Activated CD8-positive, alpha-beta T cell treated with anti-CD3 and anti-CD28 coated beads, Interleukin-2, amount 10 ng/mL, durations not matched to agents 7 days and 5 days (primary cell): ENCODE measurements at regions of chr9 and their contacts with region 1.

Region 1: DNA sequence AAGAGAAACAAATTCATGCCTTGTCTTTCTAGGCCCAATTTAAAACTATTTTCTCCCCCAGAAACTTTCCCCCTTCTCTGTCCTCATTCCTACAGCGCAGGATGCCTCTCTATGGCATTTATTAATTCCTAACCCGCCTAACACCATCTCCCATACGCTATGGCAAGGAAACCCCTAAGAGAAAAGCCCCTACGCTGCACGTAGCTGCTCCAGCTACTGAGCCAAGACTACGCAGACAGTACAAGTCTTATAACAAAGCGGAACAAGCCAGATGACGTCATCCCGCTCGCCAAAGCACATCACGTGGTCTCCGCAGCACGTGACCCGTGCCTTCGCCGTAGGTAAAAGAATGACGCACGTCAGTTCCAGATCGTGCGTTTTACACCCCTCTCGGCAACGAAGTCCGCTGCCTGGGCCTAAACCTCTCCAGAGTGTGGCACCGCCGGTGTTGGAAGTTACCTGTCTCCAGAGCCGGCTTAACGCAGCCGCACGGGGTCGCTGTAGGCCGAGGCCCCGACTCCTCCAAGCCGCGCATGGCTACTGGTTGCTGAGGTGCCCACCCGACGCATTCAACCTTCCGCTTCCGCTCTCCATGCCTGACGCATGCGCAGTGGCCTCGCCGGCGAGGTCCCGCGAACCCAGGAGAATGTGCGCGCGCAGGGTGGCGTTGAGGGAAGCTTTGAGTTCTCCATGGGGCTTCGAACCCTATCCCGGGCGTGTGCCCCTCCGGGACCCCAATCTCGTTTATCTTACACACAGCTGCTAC is at the start of gene TRMO:
- DNase-seq: peak; percentile 98
- ATAC-seq: peak; percentile 85
- H3K4me3 Mint-ChIP-seq: peak within 1 kb of the TSS; percentile 89
- H3K27ac Mint-ChIP-seq: peak within 1 kb of the TSS; percentile 97
- H3K4me1 Mint-ChIP-seq: peaks cover 49% of the 10 kb centered on the region
- H3K27me3 Mint-ChIP-seq: peaks cover 2% of the 10 kb centered on the region
- total RNA-seq, gene TRMO: 18.7 to 19.2 TPM

Region 2: GRCh38 chr9:97696803-97697601 is 225.1 kb before region 1 on chr9 and contains the start of gene XPA:
- CTCF ChIA-PET with region 1: interaction called, 13 read pairs
- POLR2A ChIA-PET with region 1: interaction called, 6 read pairs
- DNase-seq: peak; percentile 97
- ATAC-seq: peak; percentile 98
- H3K4me3 Mint-ChIP-seq: peak within 1 kb of the TSS; percentile 81
- H3K27ac Mint-ChIP-seq: peak within 1 kb of the TSS; percentile 88
- H3K4me1 Mint-ChIP-seq: peaks cover 55% of the 10 kb centered on the region
- H3K27me3 Mint-ChIP-seq: peaks cover 9% of the 10 kb centered on the region
- total RNA-seq, gene XPA: 10.2 TPM

Region 3: GRCh38 chr9:97840521-97840920 is 81.6 kb before region 1 on chr9:
- CTCF ChIA-PET with region 1: no interaction called
- POLR2A ChIA-PET with region 1: no interaction called
- DNase-seq: no peak
- ATAC-seq: no peak
- H3K4me3 Mint-ChIP-seq: no peak overlapping the region
- H3K27ac Mint-ChIP-seq: no peak overlapping the region
- H3K4me1 Mint-ChIP-seq: no peaks in the 10 kb centered on the region
- H3K27me3 Mint-ChIP-seq: peaks cover 54% of the 10 kb centered on the region

Region 4: DNA sequence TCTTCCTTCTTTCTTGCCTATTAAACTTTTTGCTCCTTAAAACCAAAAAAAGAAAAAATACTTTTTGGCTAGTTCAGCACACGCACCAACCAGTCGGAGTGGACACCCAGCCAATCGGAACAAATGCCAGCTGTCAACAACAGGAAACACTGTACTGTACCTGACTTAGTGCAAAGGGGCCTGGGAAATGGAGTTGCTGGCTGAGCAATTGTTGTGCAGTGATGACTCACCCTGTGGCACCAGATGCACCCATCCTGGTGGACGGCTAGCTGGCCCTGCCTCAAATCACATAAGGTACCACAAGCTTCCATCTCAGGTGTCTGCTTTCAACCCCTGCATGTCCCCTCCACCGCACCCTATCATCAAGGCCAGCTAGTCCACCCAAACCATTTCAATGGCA is 48.3 kb before region 1 on chr9:
- CTCF ChIA-PET with region 1: no interaction called
- POLR2A ChIA-PET with region 1: no interaction called
- DNase-seq: no peak
- ATAC-seq: no peak
- H3K4me3 Mint-ChIP-seq: no peak overlapping the region
- H3K27ac Mint-ChIP-seq: no peak overlapping the region
- H3K4me1 Mint-ChIP-seq: no peaks in the 10 kb centered on the region
- H3K27me3 Mint-ChIP-seq: peaks cover 19% of the 10 kb centered on the region

Region 5: DNA sequence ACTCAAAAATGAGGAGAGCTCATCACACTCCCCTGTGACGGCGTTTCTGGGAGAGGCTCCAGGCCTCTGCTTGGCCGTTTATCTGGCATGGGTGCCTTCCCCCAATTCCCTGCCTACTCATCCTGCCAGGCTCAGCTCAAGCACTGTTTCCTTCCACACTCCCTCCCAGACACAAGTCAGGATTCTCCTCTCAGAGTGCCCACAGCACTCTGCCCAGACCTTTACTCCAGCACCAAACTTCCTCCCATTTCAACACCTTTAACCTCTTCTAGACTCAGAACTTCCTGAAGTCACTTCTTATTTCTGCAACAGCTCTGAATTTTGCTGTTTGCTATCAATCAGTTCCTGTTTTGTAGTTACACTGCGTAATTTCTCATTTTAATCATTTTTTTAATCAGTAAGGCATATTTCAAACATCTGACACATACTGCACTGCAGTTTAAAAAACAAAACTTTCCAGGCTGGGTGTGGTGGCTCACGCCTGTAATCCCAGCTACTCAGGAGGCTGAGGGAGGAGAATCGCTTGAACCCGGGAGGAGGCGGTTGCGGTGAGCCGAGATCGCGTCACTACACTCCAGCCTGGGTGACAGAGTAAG is 15.8 kb before region 1 on chr9:
- CTCF ChIA-PET with region 1: interaction called, 222 read pairs
- POLR2A ChIA-PET with region 1: interaction called, 76 read pairs
- DNase-seq: no peak
- ATAC-seq: peak; percentile 3
- H3K4me3 Mint-ChIP-seq: peak overlapping the region; percentile 72
- H3K27ac Mint-ChIP-seq: peak overlapping the region; percentile 98
- H3K4me1 Mint-ChIP-seq: peaks cover 70% of the 10 kb centered on the region
- H3K27me3 Mint-ChIP-seq: no peaks in the 10 kb centered on the region

Region 6: DNA sequence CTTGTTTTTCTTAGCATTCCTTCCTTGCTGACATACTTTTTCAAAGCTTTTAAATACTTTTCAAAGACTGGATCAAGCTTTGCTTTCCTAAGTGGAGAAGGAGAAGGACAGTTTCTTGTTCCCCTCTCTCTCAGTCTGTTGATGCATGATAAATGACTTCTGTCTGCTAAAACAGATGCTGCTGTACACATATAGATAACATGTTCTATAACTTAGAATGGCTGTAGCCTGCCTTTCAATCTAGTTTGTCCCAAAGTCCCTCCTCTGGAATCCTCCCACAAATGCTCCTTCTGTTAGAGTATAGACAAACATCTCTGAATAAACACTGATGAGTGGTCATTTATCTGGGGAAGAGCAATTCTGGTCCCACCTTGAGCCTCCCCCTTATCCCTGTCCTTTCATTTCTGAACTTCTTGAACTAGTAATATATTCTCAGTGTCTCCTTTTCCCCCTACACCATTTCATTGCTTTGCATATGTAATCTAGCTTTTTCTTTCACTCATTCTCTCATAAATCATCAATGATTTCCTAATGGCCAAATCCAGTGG is 21.2 kb after region 1 on chr9:
- CTCF ChIA-PET with region 1: interaction called, 74 read pairs
- POLR2A ChIA-PET with region 1: interaction called, 4 read pairs
- DNase-seq: no peak
- ATAC-seq: no peak
- H3K4me3 Mint-ChIP-seq: no peak overlapping the region
- H3K27ac Mint-ChIP-seq: no peak overlapping the region
- H3K4me1 Mint-ChIP-seq: peaks cover 6% of the 10 kb centered on the region
- H3K27me3 Mint-ChIP-seq: peaks cover 20% of the 10 kb centered on the region

Region 7: DNA sequence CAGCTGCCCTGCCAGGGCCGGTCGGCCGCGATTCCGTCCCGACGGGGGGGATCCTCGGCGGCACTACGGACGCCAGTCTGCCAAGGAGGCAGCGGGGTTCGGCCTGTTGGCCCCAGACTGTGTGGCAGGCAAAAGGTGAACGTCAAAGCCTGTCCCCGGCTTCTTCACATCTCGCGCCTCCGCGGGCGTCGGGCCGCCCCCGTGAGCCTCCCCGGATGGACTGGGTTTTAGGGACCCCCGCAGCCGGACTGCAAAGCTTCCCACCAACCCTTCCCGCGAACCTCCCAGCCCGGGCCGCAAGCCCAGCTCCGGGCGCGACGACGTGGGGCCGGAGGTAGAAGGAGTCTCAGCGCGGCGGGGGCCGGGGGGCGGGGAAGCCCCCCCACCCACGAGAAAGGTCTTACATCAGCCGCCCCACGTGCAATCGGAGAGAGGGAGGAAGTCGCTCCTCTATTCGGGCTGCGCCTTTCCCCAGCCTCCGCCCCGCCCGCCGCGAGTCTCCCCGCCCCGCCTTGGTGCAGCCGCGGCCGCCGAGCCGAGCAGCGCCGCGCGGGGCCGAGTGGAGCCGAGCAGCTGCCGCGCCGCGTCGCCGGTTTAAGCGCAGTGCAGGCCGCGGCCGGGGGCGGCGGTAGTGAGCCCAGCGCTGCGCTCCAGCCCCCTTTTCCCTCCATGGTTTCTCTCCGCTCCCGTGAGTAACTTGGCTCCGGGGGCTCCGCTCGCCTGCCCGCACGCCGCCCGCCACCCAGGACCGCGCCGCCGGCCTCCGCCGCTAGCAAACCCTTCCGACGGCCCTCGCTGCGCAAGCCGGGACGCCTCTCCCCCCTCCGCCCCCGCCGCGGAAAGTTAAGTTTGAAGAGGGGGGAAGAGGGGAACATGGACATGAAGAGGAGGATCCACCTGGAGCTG is 60.8 kb after region 1 on chr9 and contains the start of gene ANP32B:
- CTCF ChIA-PET with region 1: interaction called, 58 read pairs
- POLR2A ChIA-PET with region 1: interaction called, 110 read pairs
- DNase-seq: peak; percentile 95
- ATAC-seq: peak; percentile 83
- H3K4me3 Mint-ChIP-seq: peak within 1 kb of the TSS; percentile 84
- H3K27ac Mint-ChIP-seq: peak within 1 kb of the TSS; percentile 95
- H3K4me1 Mint-ChIP-seq: peaks cover 48% of the 10 kb centered on the region
- H3K27me3 Mint-ChIP-seq: no peaks in the 10 kb centered on the region
- total RNA-seq, gene ANP32B: 347 to 354 TPM

Region 8: DNA sequence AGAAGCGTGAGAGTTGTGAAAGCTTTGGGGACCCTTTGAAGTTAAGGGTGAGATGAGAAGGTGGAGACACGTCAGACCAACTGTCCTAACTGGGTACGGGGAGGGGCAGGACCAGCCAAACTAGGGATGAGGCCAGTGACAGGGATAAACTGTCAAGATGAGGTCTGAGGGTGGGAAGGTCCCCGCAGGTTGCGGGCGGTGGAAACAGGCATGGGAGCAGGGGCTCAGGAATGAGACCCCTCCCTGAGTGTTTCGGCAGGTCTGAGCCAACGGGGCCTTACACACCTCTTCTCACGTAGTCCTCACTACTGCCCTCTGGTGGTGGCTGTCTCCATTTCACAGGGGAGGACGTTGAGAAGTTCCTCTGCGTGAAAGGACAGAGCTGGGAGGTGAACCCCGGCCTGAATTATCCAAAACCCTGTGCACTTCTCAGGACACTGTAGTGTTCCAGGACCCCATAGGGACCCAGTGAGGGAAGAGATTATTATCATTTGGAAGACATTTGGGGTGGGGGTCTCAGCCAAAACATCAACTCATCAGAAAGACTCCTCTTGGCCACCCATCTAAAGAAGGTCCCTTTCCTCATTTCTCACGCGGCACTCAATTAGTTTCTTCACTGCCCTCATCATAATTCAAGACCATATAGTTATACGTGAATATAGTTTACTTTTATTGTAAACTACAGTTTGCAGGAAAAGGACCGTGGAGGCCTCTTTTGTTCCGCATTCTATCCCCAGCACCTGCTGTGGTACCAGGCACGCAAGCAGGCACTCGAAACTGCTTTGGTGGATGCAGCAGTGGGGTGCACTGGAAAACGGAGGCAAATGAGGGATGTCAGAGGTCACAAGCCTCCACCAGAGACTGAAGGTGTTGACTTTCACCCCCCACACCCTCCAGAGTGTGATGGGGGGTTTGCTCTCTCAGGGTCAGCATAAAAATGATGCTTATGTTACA is 112.7 kb after region 1 on chr9:
- CTCF ChIA-PET with region 1: interaction called, 50 read pairs
- POLR2A ChIA-PET with region 1: interaction called, 3 read pairs
- DNase-seq: peak; percentile 95
- ATAC-seq: peak; percentile 98
- H3K4me3 Mint-ChIP-seq: no peak overlapping the region
- H3K27ac Mint-ChIP-seq: peak overlapping the region; percentile 65
- H3K4me1 Mint-ChIP-seq: peaks cover 10% of the 10 kb centered on the region
- H3K27me3 Mint-ChIP-seq: no peaks in the 10 kb centered on the region

Region 9: DNA sequence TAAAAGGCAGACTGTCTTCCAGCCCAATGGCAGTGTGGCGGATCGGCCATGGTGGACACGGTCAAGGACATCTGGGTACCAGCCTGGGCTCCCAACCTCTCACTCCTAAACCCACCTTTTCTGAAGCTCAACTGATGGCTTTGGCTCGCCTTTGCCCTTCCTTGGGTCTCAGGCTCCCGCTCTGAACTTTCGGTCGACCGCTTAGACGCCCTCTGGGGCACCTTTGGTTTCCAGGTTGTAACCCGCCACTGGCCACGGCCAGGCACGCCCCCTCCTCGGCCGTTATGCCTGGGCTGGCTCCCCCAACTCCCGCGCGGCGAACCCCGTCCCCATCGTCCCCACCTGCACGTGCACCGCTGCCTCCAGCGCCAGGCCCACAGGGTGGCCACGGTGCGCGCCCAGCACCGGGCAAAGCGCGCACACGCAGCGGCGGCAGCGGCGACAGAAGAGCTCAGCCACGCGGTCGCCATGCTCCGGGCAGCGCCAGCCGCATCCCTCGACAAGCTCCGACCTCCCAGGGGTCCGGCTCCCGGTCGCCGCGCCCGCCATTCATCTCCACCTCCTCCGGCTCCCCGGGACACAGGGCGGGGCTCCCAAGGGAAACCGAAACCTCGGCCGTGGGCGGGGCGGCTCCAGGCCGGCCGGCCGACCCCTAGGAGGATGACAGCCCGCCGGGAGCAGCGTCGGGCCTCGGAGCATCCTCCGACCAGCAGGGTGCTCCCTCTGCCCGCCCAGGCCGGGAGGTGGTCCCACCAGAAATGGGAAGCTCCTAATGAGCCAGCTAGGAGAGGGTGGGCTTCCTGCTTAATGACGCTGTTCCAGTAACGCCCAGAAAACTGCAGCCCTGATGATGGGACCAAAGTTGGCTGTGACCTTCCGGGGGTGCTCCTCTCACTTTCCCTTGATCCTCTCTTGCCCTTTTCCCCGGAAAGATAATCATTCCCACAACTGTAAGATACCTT is 196.8 kb after region 1 on chr9 and contains the start of gene TRIM14:
- CTCF ChIA-PET with region 1: interaction called, 3 read pairs
- POLR2A ChIA-PET with region 1: interaction called, 10 read pairs
- DNase-seq: peak; percentile 75
- ATAC-seq: peak; percentile 82
- H3K4me3 Mint-ChIP-seq: peak within 1 kb of the TSS; percentile 83
- H3K27ac Mint-ChIP-seq: peak within 1 kb of the TSS; percentile 92
- H3K4me1 Mint-ChIP-seq: peaks cover 44% of the 10 kb centered on the region
- H3K27me3 Mint-ChIP-seq: no peaks in the 10 kb centered on the region
- total RNA-seq, gene TRIM14: 85.2 to 90.5 TPM